ENCODE measurements at regions of chr15 and their contacts with region 1.

Region 1: GRCh38 chr15:65583701-65584100 is 27.2 kb downstream of the INTS14 start:
- DNase-seq: no peak
- H3K4me3 ChIP-seq: no peak overlapping the region
- H3K27ac ChIP-seq: peak overlapping the region in 2 of 5 donors; percentile 40 to 55
- H3K4me1 ChIP-seq: peaks cover 0 to 43% of the 10 kb centered on the region in 2 donors
- H3K27me3 ChIP-seq: no peaks in the 10 kb centered on the region
- CTCF ChIP-seq: no peak
- POLR2A ChIP-seq: no peak

Region 2: GRCh38 chr15:65400760-65401610 is 182.7 kb before region 1 on chr15:
- intact Hi-C with region 1: loop called in 1 of 2 experiments (anchors 10 kb)
- DNase-seq: peak; percentile 65 to 85 (median 81)
- H3K4me3 ChIP-seq: no peak overlapping the region
- H3K27ac ChIP-seq: peak overlapping the region in 1 of 5 donors; percentile 38
- H3K4me1 ChIP-seq: peaks cover 6 to 11% of the 10 kb centered on the region in 2 donors
- H3K27me3 ChIP-seq: no peaks in the 10 kb centered on the region
- CTCF ChIP-seq: peak; percentile 38 to 73 (median 68)
- POLR2A ChIP-seq: no peak

Measured in adrenal gland (tissue), 19 donors.